ENCODE measurements at regions of chr9 and their contacts with region 1.

Region 1: GRCh38 chr9:24738421-24738961 is 192.8 kb upstream of the IZUMO3 start:
- DNase-seq: no peak
- ATAC-seq: no peak
- H3K4me3 ChIP-seq: no peak overlapping the region
- H3K4me3 Mint-ChIP-seq: no peak overlapping the region
- H3K27ac ChIP-seq: no peak overlapping the region
- H3K27ac Mint-ChIP-seq: no peak overlapping the region
- H3K4me1 ChIP-seq: no peaks in the 10 kb centered on the region
- H3K4me1 Mint-ChIP-seq: no peaks in the 10 kb centered on the region
- H3K27me3 ChIP-seq: no peaks in the 10 kb centered on the region
- H3K27me3 Mint-ChIP-seq: no peaks in the 10 kb centered on the region
- CTCF ChIP-seq: no peak

Region 2: DNA sequence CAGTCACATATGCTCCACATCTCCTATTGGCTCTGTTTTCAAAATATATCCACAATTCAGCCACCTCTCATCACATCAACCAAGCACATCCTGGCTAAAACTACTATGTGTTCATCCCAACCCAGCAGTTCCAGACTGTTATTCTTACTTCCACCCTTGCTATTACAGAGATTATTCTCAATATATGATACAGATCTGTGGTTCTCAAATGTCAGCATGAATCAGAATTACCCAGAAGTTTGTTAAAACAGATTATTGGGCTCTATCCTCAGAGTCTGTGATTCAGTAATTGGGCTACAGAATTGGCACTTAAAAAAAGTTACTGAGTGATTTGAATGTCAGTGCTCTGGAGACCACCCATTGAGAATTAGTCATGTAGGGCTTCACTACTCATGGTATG is 114.0 kb before region 1 on chr9:
- CTCF ChIA-PET with region 1: no interaction called
- POLR2A ChIA-PET with region 1: no interaction called
- intact Hi-C with region 1: no loop called
- DNase-seq: no peak
- ATAC-seq: no peak
- H3K4me3 ChIP-seq: no peak overlapping the region
- H3K4me3 Mint-ChIP-seq: no peak overlapping the region
- H3K27ac ChIP-seq: no peak overlapping the region
- H3K27ac Mint-ChIP-seq: no peak overlapping the region
- H3K4me1 ChIP-seq: no peaks in the 10 kb centered on the region
- H3K4me1 Mint-ChIP-seq: no peaks in the 10 kb centered on the region
- H3K27me3 ChIP-seq: no peaks in the 10 kb centered on the region
- H3K27me3 Mint-ChIP-seq: no peaks in the 10 kb centered on the region
- CTCF ChIP-seq: no peak

Region 3: DNA sequence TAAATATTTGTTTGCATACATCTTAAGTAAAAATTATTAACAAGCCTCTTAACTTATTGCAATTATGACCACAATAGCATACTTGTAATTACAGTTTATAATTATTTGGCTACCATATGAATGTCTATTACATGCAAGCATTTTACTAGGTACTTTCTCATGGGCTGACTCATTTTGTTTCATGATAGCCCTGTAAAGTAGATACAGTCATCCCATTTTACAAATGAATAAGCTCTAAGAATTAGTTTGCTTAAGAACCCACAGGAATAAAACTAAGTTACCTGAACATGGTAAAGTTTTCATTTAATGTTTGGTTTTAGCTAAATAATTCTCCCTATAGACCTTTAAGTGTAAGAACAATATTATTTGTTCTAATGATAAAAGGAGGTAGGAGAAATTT is 66.2 kb before region 1 on chr9:
- CTCF ChIA-PET with region 1: no interaction called
- POLR2A ChIA-PET with region 1: no interaction called
- intact Hi-C with region 1: loop called (anchors 10 kb)
- DNase-seq: no peak
- ATAC-seq: no peak
- H3K4me3 ChIP-seq: no peak overlapping the region
- H3K4me3 Mint-ChIP-seq: no peak overlapping the region
- H3K27ac ChIP-seq: no peak overlapping the region
- H3K27ac Mint-ChIP-seq: no peak overlapping the region
- H3K4me1 ChIP-seq: no peaks in the 10 kb centered on the region
- H3K4me1 Mint-ChIP-seq: no peaks in the 10 kb centered on the region
- H3K27me3 ChIP-seq: no peaks in the 10 kb centered on the region
- H3K27me3 Mint-ChIP-seq: no peaks in the 10 kb centered on the region
- CTCF ChIP-seq: no peak

Region 4: DNA sequence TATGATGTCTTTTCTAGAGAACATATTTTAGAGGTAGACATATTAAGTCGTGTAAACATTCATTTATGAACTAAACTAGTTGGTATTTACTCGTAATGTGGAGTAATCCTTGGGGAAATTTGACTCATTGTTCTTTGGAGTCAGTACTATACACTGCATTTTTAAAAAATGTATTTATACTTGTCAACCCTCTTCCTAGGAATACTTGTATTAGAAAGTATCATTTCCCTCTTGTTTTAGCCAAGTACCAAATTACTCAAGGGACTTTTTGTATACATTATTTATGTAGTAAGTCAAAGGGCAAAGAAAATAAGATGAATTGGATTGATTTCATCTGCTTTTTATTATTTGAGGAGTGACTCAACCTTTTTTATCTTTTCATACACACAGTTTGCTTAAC is 55.3 kb after region 1 on chr9:
- CTCF ChIA-PET with region 1: no interaction called
- POLR2A ChIA-PET with region 1: no interaction called
- intact Hi-C with region 1: no loop called
- DNase-seq: no peak
- ATAC-seq: no peak
- H3K4me3 ChIP-seq: no peak overlapping the region
- H3K4me3 Mint-ChIP-seq: no peak overlapping the region
- H3K27ac ChIP-seq: no peak overlapping the region
- H3K27ac Mint-ChIP-seq: no peak overlapping the region
- H3K4me1 ChIP-seq: no peaks in the 10 kb centered on the region
- H3K4me1 Mint-ChIP-seq: no peaks in the 10 kb centered on the region
- H3K27me3 ChIP-seq: no peaks in the 10 kb centered on the region
- H3K27me3 Mint-ChIP-seq: no peaks in the 10 kb centered on the region
- CTCF ChIP-seq: no peak

Region 5: DNA sequence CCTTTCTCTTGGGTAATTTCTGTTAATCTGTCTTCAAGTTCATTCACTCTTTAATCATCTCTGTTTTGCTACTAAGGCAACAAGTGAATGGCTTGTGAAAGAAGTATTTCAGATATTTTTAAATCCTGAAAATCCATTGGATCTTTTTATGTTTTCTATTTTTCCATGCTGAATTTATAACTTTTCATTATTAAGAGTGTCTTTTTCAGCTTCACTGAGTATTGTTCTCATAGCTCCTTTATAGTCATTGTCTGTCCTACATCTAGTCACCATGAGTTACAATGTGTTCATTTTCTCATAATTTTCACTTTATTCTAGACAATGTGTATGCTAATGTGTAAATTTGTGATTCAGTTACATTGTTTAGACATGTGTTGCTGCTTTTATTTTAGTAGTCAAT is 383.3 kb after region 1 on chr9:
- CTCF ChIA-PET with region 1: no interaction called
- POLR2A ChIA-PET with region 1: no interaction called
- intact Hi-C with region 1: no loop called
- DNase-seq: no peak
- ATAC-seq: no peak
- H3K4me3 ChIP-seq: no peak overlapping the region
- H3K4me3 Mint-ChIP-seq: no peak overlapping the region
- H3K27ac ChIP-seq: no peak overlapping the region
- H3K27ac Mint-ChIP-seq: no peak overlapping the region
- H3K4me1 ChIP-seq: no peaks in the 10 kb centered on the region
- H3K4me1 Mint-ChIP-seq: no peaks in the 10 kb centered on the region
- H3K27me3 ChIP-seq: no peaks in the 10 kb centered on the region
- H3K27me3 Mint-ChIP-seq: no peaks in the 10 kb centered on the region
- CTCF ChIP-seq: no peak

Measured in B cell (primary cell).